ENCODE measurements at regions of chr17 and their contacts with region 1.

Region 1: DNA sequence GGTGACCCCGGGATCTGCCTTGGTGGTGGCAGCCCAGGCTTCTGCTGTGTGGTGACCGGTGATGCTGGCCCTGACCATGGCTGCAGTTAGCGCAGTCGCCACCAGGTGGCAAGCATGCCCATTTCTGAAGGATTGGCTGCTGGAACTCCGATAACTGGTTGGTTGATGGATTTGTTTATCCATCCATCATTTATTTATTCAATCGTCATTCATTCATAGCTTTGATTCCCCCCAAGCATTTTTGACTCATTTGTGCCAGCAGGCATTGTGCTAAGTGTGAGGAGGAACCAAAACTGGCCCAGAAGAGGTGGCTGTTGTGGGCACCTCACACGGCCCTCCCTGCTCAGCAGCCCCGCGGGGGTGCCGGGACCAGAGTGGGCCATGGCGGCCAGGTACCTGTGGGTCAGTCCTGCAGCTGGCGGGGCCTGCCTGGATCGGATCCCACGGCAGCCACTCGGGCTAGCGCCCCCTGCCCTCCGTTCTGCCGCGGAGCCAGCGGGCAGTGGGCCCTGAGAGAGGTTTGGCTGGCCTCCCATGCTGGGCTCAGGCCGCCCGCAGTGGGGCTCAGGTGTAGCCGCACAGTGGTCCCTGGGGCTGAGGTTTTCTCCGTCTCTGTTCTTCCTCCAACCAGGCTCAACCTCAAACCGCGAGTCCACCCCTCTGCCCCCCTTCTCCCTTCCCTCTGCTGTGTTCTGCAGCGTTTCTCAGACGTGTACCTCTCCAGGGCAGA is 28.8 kb upstream of the ITGA3 start:
- DNase-seq: peak; percentile 75 to 88 (median 79)
- ATAC-seq: peak; percentile 53 to 87 (median 80)
- H3K4me3 ChIP-seq: peak overlapping the region in 7 of 12 donors; percentile 1 to 34 (median 15)
- H3K27ac ChIP-seq: no peak overlapping the region
- H3K4me1 ChIP-seq: peaks cover 3 to 23% (median 10%) of the 10 kb centered on the region in 12 donors
- H3K27me3 ChIP-seq: peaks cover 0 to 10% (median 0%) of the 10 kb centered on the region in 9 donors
- CTCF ChIP-seq: peak; percentile 90 to 98 (median 96)
- POLR2A ChIP-seq: no peak

Region 2: GRCh38 chr17:50055426-50056230 is 28.6 kb after region 1 on chr17 and contains the start of gene ITGA3:
- intact Hi-C with region 1: loop called in 4 of 10 experiments (anchors 2 to 5 kb)
- DNase-seq: peak; percentile 79 to 86 (median 84)
- ATAC-seq: peak; percentile 43 to 74 (median 70)
- H3K4me3 ChIP-seq: peak within 1 kb of the TSS; percentile 63 to 97 (median 78)
- H3K27ac ChIP-seq: peak within 1 kb of the TSS; percentile 2 to 97 (median 87)
- H3K4me1 ChIP-seq: peaks cover 0 to 88% (median 56%) of the 10 kb centered on the region in 12 donors
- H3K27me3 ChIP-seq: peaks cover 0 to 24% (median 0%) of the 10 kb centered on the region in 9 donors
- CTCF ChIP-seq: no peak
- POLR2A ChIP-seq: no peak
- total RNA-seq, gene ITGA3: 18.4 to 71.2 (median 23.6) TPM

Region 3: GRCh38 chr17:50064258-50065001 is 37.4 kb after region 1 on chr17:
- intact Hi-C with region 1: loop called in 1 of 10 experiments (anchors 5 kb)
- DNase-seq: peak in 3 of 5 donors; percentile 54 to 79 (median 78)
- ATAC-seq: peak in 3 of 4 donors; percentile 1 to 13 (median 3)
- H3K4me3 ChIP-seq: no peak overlapping the region
- H3K27ac ChIP-seq: peak overlapping the region; percentile 45 to 97 (median 89)
- H3K4me1 ChIP-seq: peaks cover 0 to 84% (median 64%) of the 10 kb centered on the region in 12 donors
- H3K27me3 ChIP-seq: no peaks in the 10 kb centered on the region
- CTCF ChIP-seq: no peak
- POLR2A ChIP-seq: no peak

Region 4: GRCh38 chr17:50071692-50072486 is 44.8 kb after region 1 on chr17:
- intact Hi-C with region 1: loop called in 2 of 10 experiments (anchors 5 kb)
- DNase-seq: peak in 2 of 5 donors; percentile 0 to 53
- ATAC-seq: no peak
- H3K4me3 ChIP-seq: no peak overlapping the region
- H3K27ac ChIP-seq: no peak overlapping the region
- H3K4me1 ChIP-seq: peaks cover 0 to 10% (median 0%) of the 10 kb centered on the region in 12 donors
- H3K27me3 ChIP-seq: no peaks in the 10 kb centered on the region
- CTCF ChIP-seq: no peak
- POLR2A ChIP-seq: no peak

Region 5: DNA sequence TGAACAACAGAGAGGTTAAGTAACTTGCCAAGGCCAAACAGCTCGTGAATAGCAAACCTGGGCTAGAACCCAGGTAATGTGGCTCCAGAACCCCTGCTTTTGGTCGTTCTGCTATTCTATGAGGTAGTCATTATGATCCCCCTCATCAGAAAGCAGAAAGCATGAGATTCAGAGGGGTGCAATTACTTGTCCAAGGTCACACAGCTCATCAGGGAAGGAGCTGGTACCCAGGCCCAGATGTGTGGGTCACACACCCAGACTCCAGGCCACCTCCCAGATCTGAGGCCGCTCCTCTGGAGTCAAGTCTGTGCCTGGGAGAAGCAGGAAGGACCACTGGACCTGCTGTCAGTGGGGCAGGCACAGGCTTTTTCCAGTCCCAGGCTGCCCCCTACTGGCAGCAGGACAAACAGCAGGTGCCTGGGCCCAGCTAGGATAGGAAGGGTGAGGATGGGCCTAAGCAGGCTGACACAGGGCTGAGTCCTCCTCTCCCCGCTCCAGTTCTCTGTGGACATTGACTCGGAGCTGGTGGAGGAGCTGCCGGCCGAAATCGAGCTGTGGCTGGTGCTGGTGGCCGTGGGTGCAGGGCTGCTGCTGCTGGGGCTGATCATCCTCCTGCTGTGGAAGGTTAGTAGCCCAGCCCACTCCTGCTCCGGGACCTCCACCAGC is 60.3 kb after region 1 on chr17:
- intact Hi-C with region 1: loop called (anchors 1 to 2 kb)
- DNase-seq: peak; percentile 60 to 86 (median 71)
- ATAC-seq: peak; percentile 66 to 91 (median 87)
- H3K4me3 ChIP-seq: no peak overlapping the region
- H3K27ac ChIP-seq: no peak overlapping the region
- H3K4me1 ChIP-seq: no peaks in the 10 kb centered on the region
- H3K27me3 ChIP-seq: no peaks in the 10 kb centered on the region
- CTCF ChIP-seq: peak in 11 of 12 donors; percentile 92 to 99 (median 97)
- POLR2A ChIP-seq: no peak

Region 6: DNA sequence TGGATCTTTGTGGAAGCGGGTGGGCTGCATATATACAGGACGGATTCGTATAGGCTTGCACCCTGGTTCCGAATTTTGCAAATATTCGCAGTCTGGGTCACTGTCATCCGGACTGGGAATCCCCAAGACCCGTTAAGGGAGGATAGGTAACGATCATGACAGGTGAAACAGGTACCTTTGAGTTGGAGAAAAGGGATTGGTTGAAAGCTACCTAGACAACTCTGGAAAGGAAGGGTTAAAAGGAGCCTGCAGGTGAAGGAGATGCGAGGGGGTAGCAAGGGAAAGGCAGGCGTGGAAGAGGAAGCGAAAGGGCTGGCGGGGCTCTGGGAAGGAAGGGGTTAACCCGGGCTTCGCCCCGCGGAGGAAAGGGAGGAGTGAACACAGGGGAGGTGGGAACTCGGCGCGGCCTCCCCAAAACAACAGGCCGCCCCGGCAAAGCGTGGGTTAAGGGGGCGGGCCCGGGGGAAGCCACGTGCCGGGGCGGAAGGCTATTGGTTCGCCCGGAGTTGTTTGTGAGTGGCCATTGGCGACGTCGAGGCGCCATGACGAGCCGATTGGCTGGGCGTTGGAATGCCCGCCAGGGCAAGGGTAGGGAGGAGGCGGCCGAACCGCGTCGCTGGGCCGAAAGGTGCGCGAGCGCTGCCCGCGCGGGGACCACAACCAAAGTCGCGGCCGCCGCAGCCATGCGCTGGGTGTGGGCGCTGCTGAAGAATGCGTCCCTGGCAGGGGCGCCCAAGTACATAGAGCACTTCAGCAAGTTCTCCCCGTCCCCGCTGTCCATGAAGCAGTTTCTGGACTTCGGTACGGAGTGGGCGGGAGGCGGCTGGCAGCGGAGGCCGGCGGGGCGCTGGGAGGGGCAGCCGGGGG is 67.9 kb after region 1 on chr17 and contains the start of gene PDK2:
- intact Hi-C with region 1: loop called in 1 of 10 experiments (anchors 2 kb)
- DNase-seq: peak; percentile 96 to 98 (median 97)
- ATAC-seq: peak; percentile 91 to 96 (median 94)
- H3K4me3 ChIP-seq: peak within 1 kb of the TSS; percentile 63 to 97 (median 79)
- H3K27ac ChIP-seq: peak within 1 kb of the TSS; percentile 84 to 97 (median 89)
- H3K4me1 ChIP-seq: peaks cover 0 to 52% (median 31%) of the 10 kb centered on the region in 12 donors
- H3K27me3 ChIP-seq: no peaks in the 10 kb centered on the region
- CTCF ChIP-seq: no peak
- POLR2A ChIP-seq: peak in 1 of 2 donors; percentile 94
- total RNA-seq, gene PDK2: 142 to 490 (median 200) TPM

Region 7: DNA sequence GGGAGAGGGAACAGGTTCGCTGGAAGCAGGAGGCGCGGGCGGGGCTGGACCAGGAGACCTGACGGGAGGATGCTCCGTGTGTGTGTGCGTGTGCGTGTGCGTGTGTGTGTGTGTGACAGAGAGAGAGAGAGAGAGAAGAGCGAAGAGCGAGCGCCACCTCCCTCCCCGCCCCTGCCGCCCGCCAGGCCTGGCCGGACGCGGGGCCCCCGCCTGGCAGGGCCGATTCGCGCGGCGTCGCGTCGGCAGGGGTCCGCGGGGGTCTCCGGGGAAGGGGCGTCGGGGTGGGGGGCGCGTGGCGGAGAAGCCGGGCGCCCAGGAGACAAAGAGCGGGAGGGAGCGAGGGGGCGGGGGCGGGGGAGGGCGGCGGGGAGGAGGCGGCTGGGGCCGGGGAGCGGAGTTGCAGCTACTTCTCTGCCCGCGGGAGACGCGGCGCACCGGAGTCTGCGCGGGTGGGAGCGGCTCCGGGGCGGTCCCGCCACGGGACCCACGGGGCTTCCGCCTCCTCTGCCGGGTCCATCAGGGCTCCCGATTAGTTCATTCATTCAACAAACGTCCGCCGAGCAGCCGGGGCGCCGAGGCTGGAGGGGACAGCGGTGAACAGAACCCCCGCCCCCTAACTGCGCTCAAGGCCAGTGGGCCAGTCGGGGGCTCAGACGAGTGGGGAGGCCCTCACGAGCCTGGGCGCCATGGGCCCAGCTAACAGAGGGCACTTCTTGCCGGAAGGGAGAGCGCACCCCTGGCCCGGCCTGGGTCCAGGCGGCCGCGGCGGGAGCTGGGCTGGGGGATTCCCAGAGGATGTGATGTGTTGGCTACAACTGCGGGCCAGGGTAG is 102.9 kb after region 1 on chr17 and contains the start of gene SAMD14:
- intact Hi-C with region 1: no loop called
- DNase-seq: peak in 2 of 5 donors; percentile 50 to 54
- ATAC-seq: peak in 3 of 4 donors; percentile 5 to 31 (median 15)
- H3K4me3 ChIP-seq: peak within 1 kb of the TSS; percentile 22 to 61 (median 51)
- H3K27ac ChIP-seq: peak within 1 kb of the TSS in 1 of 12 donors; percentile 24
- H3K4me1 ChIP-seq: peaks cover 0 to 58% (median 29%) of the 10 kb centered on the region in 12 donors
- H3K27me3 ChIP-seq: peaks cover 0 to 20% (median 0%) of the 10 kb centered on the region in 9 donors
- CTCF ChIP-seq: no peak
- POLR2A ChIP-seq: no peak
- total RNA-seq, gene SAMD14: 0.44 to 3.9 (median 1.2) TPM

Region 8: DNA sequence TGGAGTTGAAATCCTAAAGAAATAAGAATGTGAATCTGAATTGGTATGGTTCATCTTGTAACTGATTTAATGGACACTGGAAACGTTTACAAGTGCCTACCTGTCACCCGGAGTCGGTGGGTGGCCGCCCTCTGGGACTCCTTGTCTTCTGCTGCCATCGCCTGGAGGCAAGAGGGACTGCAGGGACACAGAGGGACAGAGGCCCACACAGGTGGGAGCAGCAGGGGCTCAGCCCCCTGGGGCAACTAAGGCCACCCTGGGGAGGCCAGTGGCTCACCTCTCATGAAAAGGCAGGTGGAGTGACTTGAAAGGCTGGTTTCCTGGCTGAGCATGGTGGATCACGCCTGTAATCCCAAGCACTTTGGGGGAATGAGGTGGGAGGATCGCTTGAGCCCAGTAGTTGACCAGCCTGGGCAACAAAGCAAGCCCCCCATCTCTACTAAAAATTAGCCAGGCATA is 270.4 kb after region 1 on chr17:
- intact Hi-C with region 1: loop called in 3 of 10 experiments (anchors 10 kb)
- DNase-seq: peak; percentile 67 to 87 (median 74)
- ATAC-seq: peak; percentile 87 to 93 (median 92)
- H3K4me3 ChIP-seq: no peak overlapping the region
- H3K27ac ChIP-seq: no peak overlapping the region
- H3K4me1 ChIP-seq: no peaks in the 10 kb centered on the region
- H3K27me3 ChIP-seq: peaks cover 0 to 3% (median 0%) of the 10 kb centered on the region in 9 donors
- CTCF ChIP-seq: peak; percentile 86 to 97 (median 94)
- POLR2A ChIP-seq: no peak

Measured in heart left ventricle (tissue), 16 donors.